ENCODE measurements at regions of chr1 and their contacts with region 1.

Region 1: GRCh38 chr1:61049850-61050540 is 32.4 kb upstream of the NFIA start:
- DNase-seq: peak; percentile 92 to 96 (median 94)
- ATAC-seq: peak; percentile 79 to 88 (median 85)
- H3K4me3 ChIP-seq: peak overlapping the region; percentile 60 to 95 (median 84)
- H3K27ac ChIP-seq: peak overlapping the region; percentile 89 to 99 (median 98)
- H3K4me1 ChIP-seq: peaks cover 0 to 44% (median 32%) of the 10 kb centered on the region in 12 donors
- H3K27me3 ChIP-seq: peaks cover 0 to 10% (median 0%) of the 10 kb centered on the region in 9 donors
- CTCF ChIP-seq: peak; percentile 94 to 99 (median 98)
- POLR2A ChIP-seq: no peak

Region 2: GRCh38 chr1:60281360-60281932 is 768.5 kb before region 1 on chr1:
- intact Hi-C with region 1: loop called in 3 of 10 experiments (anchors 10 kb)
- DNase-seq: peak in 4 of 5 donors; percentile 43 to 72 (median 54)
- ATAC-seq: peak; percentile 87 to 97 (median 92)
- H3K4me3 ChIP-seq: no peak overlapping the region
- H3K27ac ChIP-seq: no peak overlapping the region
- H3K4me1 ChIP-seq: peaks cover 0 to 18% (median 8%) of the 10 kb centered on the region in 12 donors
- H3K27me3 ChIP-seq: no peaks in the 10 kb centered on the region
- CTCF ChIP-seq: peak; percentile 80 to 94 (median 90)
- POLR2A ChIP-seq: no peak

Region 3: DNA sequence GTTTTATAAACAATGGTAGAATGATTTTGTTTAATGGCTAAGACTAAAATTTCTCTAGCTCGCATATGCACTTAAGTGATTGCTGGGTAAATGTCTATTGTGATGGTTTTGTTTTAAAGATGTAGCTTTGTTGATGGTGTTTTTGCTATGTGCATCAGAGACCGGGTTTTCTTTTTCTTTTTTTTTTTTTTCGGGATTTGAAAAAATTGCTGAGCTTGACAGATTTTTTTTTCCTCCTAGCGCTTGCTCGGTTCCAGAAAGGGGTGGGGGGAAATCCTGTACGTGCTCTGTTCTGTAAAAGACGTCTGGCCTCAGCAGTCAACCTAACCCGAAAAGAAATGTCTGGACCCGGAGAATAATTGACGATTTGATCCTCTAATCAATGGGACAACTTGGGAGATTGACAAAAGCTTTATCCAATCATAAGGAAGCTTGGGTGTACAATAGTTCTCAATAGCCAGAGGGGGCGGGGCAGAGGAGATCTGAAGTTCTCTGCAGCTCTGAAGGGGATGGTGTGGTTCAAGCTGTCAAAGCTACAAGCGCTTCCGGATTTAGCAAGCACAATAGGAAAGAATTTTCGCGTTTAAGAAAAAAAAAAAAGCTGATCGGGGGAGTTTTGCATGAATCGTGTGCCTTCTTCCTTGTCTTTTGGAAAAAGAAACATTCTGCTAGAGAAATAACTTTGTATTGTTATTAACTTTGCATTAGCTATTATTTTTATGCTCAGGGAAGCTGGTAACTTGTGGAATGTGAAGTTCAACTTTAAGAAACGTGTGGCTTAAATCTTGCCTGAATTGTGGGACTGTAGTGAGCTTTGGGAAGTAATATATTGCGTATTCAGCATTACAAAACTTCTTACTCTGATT is 27.9 kb after region 1 on chr1:
- intact Hi-C with region 1: loop called in 8 of 10 experiments (anchors 1 to 2 kb)
- DNase-seq: peak; percentile 90 to 98 (median 96)
- ATAC-seq: peak; percentile 82 to 86 (median 84)
- H3K4me3 ChIP-seq: peak overlapping the region; percentile 44 to 81 (median 64)
- H3K27ac ChIP-seq: peak overlapping the region; percentile 75 to 98 (median 94)
- H3K4me1 ChIP-seq: peaks cover 12 to 47% (median 38%) of the 10 kb centered on the region in 12 donors
- H3K27me3 ChIP-seq: no peaks in the 10 kb centered on the region
- CTCF ChIP-seq: peak in 2 of 12 donors; percentile 8 to 15
- POLR2A ChIP-seq: peak in 1 of 2 donors; percentile 31

Region 4: DNA sequence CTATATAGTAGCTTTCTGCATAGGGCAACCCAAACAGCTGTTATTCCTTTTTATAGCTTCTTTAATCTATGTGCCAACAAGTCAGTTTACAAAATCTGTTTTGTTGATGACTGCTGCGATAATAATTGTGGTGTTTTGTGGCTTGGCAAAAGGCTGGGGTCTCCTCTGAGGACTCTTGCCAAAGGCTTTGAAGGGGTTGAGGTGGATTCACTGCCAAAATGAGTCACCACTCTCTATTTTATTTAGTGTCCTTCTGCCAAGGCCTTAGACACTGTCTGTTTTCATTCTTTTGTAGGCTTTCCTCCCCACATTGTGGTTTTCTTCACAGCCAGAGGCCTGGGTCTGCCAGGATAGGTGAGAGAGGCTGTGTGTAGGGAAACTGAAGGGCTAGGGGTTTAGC is 194.1 kb after region 1 on chr1:
- intact Hi-C with region 1: loop called in 3 of 10 experiments (anchors 10 kb)
- DNase-seq: no peak
- ATAC-seq: peak in 3 of 4 donors; percentile 27 to 53 (median 51)
- H3K4me3 ChIP-seq: no peak overlapping the region
- H3K27ac ChIP-seq: peak overlapping the region in 9 of 12 donors; percentile 5 to 68 (median 34)
- H3K4me1 ChIP-seq: peaks cover 0 to 69% (median 50%) of the 10 kb centered on the region in 12 donors
- H3K27me3 ChIP-seq: no peaks in the 10 kb centered on the region
- CTCF ChIP-seq: no peak
- POLR2A ChIP-seq: no peak

Region 5: DNA sequence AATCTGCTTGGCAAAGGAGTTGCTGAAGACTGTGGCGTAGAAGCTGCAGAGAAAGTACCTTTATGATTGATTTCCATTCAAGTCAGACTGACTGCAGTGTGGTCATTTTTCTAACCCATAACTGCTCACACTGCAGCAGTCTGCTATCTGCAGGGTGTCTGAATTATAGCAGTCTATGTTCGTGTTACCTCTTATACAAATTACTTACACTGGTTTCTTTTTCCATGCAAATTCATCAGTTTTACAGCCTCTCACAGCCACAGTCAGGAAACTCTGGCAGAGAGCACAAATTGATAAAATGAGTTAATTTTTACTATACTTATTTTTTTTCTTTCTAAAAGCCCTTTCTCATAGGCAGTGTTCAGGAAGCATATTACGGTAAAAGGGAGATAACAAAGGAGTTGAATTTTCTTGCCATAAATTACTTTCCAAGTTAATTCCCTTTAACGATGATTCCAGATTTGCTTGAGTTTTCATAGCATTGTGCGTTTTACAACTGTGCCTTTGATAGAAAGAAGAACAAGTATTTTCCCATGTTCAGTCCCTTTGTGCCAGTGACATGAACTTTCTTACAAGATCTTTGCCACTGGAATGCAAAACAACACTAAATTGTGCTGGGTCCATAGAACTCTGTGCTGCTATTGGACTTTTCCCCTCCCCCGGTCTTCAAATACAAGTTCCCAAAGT is 293.9 kb after region 1 on chr1:
- intact Hi-C with region 1: loop called in 9 of 10 experiments (anchors 2 to 10 kb)
- DNase-seq: no peak
- ATAC-seq: peak in 1 of 4 donors; percentile 14
- H3K4me3 ChIP-seq: no peak overlapping the region
- H3K27ac ChIP-seq: peak overlapping the region in 7 of 12 donors; percentile 10 to 44 (median 25)
- H3K4me1 ChIP-seq: peaks cover 0 to 44% (median 20%) of the 10 kb centered on the region in 12 donors
- H3K27me3 ChIP-seq: no peaks in the 10 kb centered on the region
- CTCF ChIP-seq: no peak
- POLR2A ChIP-seq: no peak

Region 6: GRCh38 chr1:61641578-61642336 is 591.8 kb after region 1 on chr1:
- intact Hi-C with region 1: loop called in 7 of 10 experiments (anchors 5 to 10 kb)
- DNase-seq: peak; percentile 76 to 88 (median 78)
- ATAC-seq: peak; percentile 71 to 90 (median 86)
- H3K4me3 ChIP-seq: peak overlapping the region in 8 of 12 donors; percentile 3 to 50 (median 41)
- H3K27ac ChIP-seq: peak overlapping the region in 11 of 12 donors; percentile 45 to 88 (median 77)
- H3K4me1 ChIP-seq: peaks cover 0 to 41% (median 10%) of the 10 kb centered on the region in 12 donors
- H3K27me3 ChIP-seq: no peaks in the 10 kb centered on the region
- CTCF ChIP-seq: peak; percentile 62 to 89 (median 76)
- POLR2A ChIP-seq: no peak